HAP-1 (cell line): ENCODE measurements at regions of chr4 and their contacts with region 1.

Region 1: DNA sequence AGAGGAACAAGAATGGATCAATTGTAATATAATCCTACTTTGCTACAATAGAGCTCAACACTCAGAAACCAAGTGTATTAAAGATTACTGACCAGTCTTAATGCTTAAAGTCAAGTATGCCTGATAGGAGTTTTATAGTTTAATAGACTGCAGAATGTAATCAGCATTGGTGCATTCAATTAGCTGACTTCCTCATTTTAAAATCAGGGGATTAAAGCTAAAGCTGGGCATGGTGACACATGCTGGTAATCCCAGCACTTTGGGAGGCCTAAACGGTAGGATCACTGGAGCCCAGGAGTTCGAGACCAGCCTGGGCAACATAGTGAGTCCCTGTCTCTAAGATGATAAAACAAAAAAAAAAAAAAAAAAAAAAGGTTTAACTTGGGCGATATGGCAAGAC is 10.8 kb downstream of the HNRNPDL start:
- DNase-seq: no peak
- H3K4me3 ChIP-seq: no peak overlapping the region
- H3K4me1 ChIP-seq: no peaks in the 10 kb centered on the region
- H3K27me3 ChIP-seq: no peaks in the 10 kb centered on the region

Region 2: DNA sequence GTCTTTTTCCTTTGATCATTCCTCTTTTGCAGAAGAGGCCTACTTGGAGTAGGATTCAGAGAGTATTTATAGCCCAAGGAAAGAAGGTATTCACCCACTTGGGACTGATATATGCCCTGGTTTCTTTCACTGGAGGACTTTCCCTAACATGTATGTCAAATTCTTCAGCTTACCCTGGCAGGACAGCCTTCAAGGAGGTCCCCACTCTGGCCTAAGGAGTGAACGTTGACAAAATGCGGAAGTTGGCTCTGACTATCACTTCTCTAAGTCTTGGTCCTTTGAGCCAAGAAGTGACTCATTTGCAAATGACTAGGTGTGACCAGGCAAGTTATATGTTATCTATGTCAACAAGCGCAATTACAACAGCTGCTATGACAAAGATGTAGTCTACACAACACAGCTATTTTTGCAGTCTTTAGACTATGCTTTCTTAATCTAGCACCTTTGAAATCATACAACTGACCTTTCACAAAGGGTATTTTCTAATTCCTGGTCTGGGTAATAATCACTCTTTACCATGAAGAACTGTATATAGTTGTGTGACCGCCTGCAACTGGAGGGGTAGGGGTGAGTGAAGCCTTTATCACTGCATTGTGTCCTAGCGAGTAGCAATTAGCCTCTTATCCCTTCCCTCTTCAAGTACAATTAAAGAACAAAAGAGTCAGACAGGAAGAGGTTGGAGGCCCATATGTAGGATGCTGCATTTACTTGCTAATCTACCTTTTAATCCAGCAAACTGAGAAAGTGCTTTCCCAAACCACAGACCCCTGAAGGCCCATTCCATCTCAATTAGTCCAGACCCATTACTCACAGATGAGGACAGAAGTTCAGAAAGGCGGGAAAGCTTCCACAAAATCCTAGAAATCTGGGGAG is 997.9 kb before region 1 on chr4:
- in situ Hi-C with region 1: no loop called
- DNase-seq: no peak
- H3K4me3 ChIP-seq: no peak overlapping the region
- H3K4me1 ChIP-seq: no peaks in the 10 kb centered on the region
- H3K27me3 ChIP-seq: no peaks in the 10 kb centered on the region

Region 3: GRCh38 chr4:82223715-82224114 is 195.7 kb before region 1 on chr4:
- in situ Hi-C with region 1: no loop called
- DNase-seq: no peak
- H3K4me3 ChIP-seq: no peak overlapping the region
- H3K4me1 ChIP-seq: no peaks in the 10 kb centered on the region
- H3K27me3 ChIP-seq: 0 out of 2 replicates have a peak, but pooled peaks cover 5% of the 10 kb centered on the region

Region 4: DNA sequence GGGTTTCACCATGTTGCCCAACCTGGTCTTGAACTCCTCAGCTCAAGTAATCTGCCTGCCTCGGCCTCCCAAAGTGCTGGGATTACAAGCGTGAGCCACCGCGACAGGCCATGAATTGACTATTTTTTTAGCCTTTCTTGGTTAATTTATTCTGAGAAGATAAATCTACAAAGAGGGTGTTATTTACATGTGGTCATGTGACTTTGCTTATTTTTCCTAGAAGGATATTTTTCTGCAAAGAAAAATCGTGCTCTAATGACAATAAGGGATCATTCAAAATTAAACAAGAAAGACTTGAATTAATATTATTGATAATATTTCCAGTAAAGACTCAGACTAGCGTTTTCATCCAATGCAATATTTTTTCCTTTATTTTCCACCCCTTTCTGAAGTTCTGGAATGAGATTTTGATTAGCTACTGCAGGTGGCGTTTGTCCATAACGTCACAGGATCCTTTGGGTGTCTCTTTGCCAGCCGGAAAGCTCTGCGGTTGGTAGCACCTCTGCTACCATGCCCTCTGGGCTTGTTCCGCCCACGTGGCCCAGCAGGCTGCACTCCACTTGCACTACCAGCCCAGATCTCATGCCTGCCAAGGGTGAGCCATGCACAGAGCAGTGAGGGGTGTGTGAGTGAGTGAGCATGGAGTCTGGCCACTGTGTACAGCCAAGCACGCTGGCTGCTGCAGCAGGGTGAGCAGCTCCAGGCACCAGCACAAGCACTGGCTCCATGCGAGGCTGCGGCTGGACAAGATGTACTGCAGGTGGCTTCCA is 39.3 kb before region 1 on chr4:
- in situ Hi-C with region 1: loop called (anchors 5 kb)
- DNase-seq: no peak
- H3K4me3 ChIP-seq: no peak overlapping the region
- H3K4me1 ChIP-seq: peaks cover 4% of the 10 kb centered on the region; the same call in 1 of the 2 replicates
- H3K27me3 ChIP-seq: no peaks in the 10 kb centered on the region